Calu3 (cell line): ENCODE measurements at regions of chr17 and their contacts with region 1.

Region 1: DNA sequence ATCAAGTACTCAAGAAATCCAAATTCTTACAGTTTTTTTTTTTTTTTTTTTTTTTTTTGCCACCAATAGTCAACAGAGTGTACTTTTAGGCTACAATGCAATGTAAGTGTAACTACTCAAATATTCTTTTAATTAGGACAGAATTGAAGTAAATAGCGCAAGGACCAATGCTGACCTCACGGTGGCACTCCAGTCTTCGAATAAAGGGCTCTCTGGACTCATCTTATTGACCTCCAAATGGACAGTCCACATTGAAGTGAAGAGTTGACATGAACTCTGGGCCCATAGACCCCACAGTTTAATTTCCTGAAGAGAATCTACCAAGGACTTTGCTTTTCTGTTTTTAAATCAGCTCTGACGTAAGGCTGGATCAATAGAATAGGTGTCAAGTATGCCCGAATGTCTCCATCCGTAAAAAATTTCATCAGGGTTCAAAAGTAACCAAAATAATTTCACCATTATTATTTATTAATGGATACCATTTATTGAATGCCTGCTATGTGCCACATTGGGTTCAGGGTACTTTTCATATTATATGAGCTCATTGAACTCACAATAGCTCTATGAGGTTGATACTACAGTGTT is 7.3 kb upstream of the DDX52 start:
- DNase-seq: peak; percentile 80
- H3K4me3 Mint-ChIP-seq: no peak overlapping the region
- H3K27ac Mint-ChIP-seq: no peak overlapping the region
- H3K4me1 Mint-ChIP-seq: peaks cover 17% of the 10 kb centered on the region
- H3K27me3 Mint-ChIP-seq: peaks cover 2% of the 10 kb centered on the region
- CTCF ChIP-seq: peak; percentile 85

Region 2: GRCh38 chr17:37138571-37139120 is 511.9 kb before region 1 on chr17:
- CTCF ChIA-PET with region 1: interaction called, 10 read pairs
- intact Hi-C with region 1: no loop called
- DNase-seq: no peak
- H3K4me3 Mint-ChIP-seq: no peak overlapping the region
- H3K27ac Mint-ChIP-seq: no peak overlapping the region
- H3K4me1 Mint-ChIP-seq: no peaks in the 10 kb centered on the region
- H3K27me3 Mint-ChIP-seq: no peaks in the 10 kb centered on the region
- CTCF ChIP-seq: no peak

Region 3: DNA sequence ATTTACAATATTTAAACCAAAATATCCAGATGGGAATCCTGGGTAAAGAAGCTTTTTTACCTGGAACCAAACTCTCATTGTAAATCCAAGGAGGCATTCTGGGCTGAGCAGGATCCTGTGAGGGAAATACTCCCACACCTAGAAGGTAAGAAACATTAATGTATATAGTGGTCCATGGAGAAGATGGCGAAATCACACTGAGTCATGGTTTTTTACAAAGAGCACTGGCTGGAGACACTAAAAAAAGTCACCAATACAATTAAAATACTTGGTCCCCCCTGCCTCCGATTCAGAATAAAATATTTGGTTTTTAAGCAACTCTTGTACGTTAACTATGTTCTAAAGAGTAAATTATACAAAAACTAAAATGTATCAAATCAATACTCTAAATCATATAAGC is 74.2 kb before region 1 on chr17:
- CTCF ChIA-PET with region 1: no interaction called
- intact Hi-C with region 1: no loop called
- DNase-seq: no peak
- H3K4me3 Mint-ChIP-seq: no peak overlapping the region
- H3K27ac Mint-ChIP-seq: no peak overlapping the region
- H3K4me1 Mint-ChIP-seq: no peaks in the 10 kb centered on the region
- H3K27me3 Mint-ChIP-seq: no peaks in the 10 kb centered on the region
- CTCF ChIP-seq: no peak

Region 4: DNA sequence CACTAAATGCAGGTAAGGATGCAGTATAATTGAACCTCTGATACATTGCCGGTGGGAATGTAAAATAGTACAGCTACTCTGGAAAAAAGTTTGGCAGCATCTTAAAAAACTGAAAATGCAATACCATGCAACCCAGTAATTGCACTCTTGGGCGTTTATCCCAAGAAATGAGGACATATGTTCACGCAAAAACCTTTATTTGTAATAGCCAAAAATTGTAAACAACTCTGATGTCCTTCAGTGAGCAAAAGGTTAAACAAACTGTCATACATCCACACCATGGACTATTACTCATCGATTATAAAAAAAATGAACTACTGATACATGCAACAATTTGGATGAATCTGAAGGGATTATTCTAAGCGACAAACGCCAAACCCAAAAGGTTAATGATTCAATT is 58.2 kb before region 1 on chr17:
- CTCF ChIA-PET with region 1: no interaction called
- intact Hi-C with region 1: no loop called
- DNase-seq: no peak
- H3K4me3 Mint-ChIP-seq: no peak overlapping the region
- H3K27ac Mint-ChIP-seq: no peak overlapping the region
- H3K4me1 Mint-ChIP-seq: no peaks in the 10 kb centered on the region
- H3K27me3 Mint-ChIP-seq: no peaks in the 10 kb centered on the region
- CTCF ChIP-seq: no peak

Region 5: GRCh38 chr17:37791447-37792399 is 141.2 kb after region 1 on chr17:
- CTCF ChIA-PET with region 1: interaction called, 17 read pairs
- intact Hi-C with region 1: no loop called
- DNase-seq: peak; percentile 71
- H3K4me3 Mint-ChIP-seq: no peak overlapping the region
- H3K27ac Mint-ChIP-seq: no peak overlapping the region
- H3K4me1 Mint-ChIP-seq: peaks cover 19% of the 10 kb centered on the region
- H3K27me3 Mint-ChIP-seq: peaks cover 45% of the 10 kb centered on the region
- CTCF ChIP-seq: peak; percentile 98

Region 6: DNA sequence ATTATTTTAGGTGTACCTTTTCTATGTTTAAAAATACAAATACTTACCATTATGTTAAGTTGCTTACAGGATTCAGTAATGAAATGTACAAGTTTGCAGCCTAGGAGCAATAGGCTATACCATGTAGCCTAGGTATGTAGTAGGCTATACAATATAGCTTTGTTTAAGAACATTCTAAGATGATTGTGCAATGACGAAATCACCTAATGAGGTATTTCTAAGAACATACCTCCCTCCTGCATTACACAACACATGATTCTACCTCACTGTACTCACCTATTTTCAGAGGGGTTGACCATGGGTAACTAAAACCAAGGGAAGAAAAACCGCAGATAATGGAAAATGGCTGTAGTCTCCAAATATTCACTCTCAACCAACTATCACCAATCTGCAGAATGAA is 238.4 kb after region 1 on chr17:
- CTCF ChIA-PET with region 1: no interaction called
- intact Hi-C with region 1: no loop called
- DNase-seq: no peak
- H3K4me3 Mint-ChIP-seq: no peak overlapping the region
- H3K27ac Mint-ChIP-seq: no peak overlapping the region
- H3K4me1 Mint-ChIP-seq: peaks cover 14% of the 10 kb centered on the region
- H3K27me3 Mint-ChIP-seq: no peaks in the 10 kb centered on the region
- CTCF ChIP-seq: no peak